ENCODE measurements at regions of chr1 and their contacts with region 1.

Region 1: GRCh38 chr1:169133801-169134502 is 27.5 kb downstream of the ATP1B1 start:
- DNase-seq: peak; percentile 10
- H3K4me3 ChIP-seq: no peak overlapping the region
- H3K27ac ChIP-seq: no peak overlapping the region
- H3K4me1 ChIP-seq: no peaks in the 10 kb centered on the region
- CTCF ChIP-seq: peak; percentile 68

Region 2: DNA sequence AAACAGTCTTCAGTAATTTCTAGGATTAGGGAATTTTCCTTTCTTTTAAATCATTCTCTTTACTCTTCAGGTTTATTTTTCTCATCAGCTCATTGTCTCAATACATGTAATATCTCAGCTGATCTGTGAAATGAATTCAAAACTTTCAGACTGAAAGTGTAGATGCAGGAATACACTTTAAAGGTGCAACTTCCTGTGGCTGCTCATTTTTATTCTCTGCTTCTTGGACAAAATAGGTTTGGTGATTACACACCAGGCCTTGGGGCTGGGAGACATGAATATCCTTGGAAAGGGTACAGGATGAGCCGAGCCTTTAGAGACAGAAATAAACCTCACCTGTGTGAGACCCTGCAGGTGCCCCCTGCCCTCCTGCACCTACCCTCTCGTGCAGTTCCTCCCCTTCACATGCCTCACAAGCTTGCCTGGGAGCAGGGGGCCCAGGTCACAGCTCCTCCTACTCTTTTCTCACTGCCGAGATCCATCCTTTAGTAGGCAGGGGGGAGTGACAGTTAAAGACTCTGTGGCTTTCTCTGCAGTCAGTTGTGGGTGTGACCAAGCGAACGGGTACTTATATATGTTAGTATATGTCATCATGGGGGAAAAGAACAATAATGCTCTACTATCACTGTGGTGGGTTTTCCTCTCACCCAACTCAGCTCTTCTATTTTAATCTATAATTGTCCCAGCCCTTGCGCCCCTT is 613.8 kb before region 1 on chr1:
- CTCF ChIA-PET with region 1: no interaction called
- POLR2A ChIA-PET with region 1: no interaction called
- intact Hi-C with region 1: no loop called
- DNase-seq: no peak
- H3K4me3 ChIP-seq: no peak overlapping the region
- H3K27ac ChIP-seq: no peak overlapping the region
- H3K4me1 ChIP-seq: no peaks in the 10 kb centered on the region
- CTCF ChIP-seq: no peak

Region 3: GRCh38 chr1:168603501-168604110 is 530.3 kb before region 1 on chr1:
- CTCF ChIA-PET with region 1: no interaction called
- POLR2A ChIA-PET with region 1: no interaction called
- intact Hi-C with region 1: loop called (anchors 10 kb)
- DNase-seq: peak; percentile 60
- H3K4me3 ChIP-seq: no peak overlapping the region
- H3K27ac ChIP-seq: no peak overlapping the region
- H3K4me1 ChIP-seq: no peaks in the 10 kb centered on the region
- CTCF ChIP-seq: peak; percentile 85

Region 4: DNA sequence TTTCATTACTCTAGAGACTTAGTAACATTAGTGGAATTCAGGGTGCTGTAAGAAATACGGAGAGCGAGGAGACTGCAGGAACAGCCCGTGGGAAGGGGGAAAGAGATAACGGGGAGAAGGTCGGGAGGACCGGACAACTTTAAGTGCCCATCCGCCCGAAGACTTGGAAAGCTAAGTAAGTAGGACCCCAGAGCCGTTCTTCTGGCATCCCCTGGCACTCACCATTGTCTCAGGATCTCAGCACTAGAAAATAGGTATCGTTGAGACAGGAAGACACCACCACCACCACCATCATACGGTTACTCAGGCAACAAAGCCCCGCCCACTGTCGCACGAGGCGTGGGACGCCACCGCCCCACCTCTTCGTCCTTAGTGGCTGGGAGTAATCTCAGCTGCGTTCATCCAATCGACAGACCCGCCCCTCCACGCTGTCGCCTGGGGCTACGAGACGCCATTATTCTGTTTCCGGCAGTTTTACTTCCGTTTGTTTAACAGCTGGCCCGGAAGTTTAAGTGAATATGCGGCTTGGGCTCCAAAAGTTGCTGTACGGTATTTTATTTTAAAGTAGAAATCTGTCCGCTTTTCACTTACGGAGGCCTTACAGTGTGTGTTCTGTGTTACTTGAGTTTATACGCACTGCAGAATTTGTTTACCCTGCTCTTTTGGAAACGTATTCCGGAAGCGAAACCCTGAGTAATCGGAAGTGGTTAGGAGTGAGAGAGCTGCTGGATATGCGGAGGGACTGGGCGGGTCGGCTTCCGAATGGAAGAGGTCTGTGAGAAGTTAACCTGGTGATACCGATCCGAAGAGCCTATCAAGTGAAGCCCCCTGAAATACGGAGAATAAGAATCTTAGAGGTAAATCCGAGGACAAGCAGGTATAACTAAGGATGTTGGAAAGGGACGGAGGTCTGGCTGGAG is 233.8 kb after region 1 on chr1 and contains the starts of genes BLZF1 and NME7:
- CTCF ChIA-PET with region 1: no interaction called
- POLR2A ChIA-PET with region 1: no interaction called
- intact Hi-C with region 1: no loop called
- DNase-seq: peak; percentile 97
- H3K4me3 ChIP-seq: peak within 1 kb of the TSS; percentile 95
- H3K27ac ChIP-seq: peak within 1 kb of the TSS; percentile 74
- H3K4me1 ChIP-seq: peaks cover 20% of the 10 kb centered on the region
- CTCF ChIP-seq: no peak
- total RNA-seq, gene BLZF1: 4.9 and 7.1 TPM in 2 replicates
- total RNA-seq, gene NME7: 4.2 and 9.3 TPM in 2 replicates